Activated CD8-positive, alpha-beta T cell treated with anti-CD3 and anti-CD28 coated beads for 36 hours (primary cell): ENCODE measurements at regions of chr11 and their contacts with region 1.

Region 1: DNA sequence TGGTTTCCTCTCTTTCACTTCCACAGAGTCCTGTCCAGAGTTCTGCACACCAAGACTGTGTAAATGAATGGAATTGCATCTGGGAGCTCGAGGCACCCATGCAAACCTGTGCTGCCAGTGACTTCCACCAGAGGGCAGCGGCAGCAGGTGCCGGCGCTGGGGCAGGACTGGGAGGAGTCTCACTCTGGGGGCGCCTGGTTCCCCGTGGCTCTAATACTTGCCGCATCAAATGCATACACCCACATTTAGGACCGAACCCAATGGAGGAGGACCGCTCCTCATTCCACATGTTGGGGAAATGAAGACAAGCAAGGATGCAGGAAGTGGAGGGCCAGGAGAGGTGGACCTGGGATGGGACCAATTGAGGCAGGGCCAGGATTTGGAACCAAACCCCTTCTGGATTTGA is 1.1 kb upstream of the CD6 start:
- DNase-seq: peak; percentile 90
- ATAC-seq: peak; percentile 74
- H3K4me3 Mint-ChIP-seq: peak overlapping the region; percentile 83
- H3K27ac Mint-ChIP-seq: peak overlapping the region; percentile 63
- H3K4me1 Mint-ChIP-seq: peaks cover 16% of the 10 kb centered on the region
- H3K27me3 Mint-ChIP-seq: no peaks in the 10 kb centered on the region
- CTCF ChIP-seq: peak; percentile 95

Region 2: DNA sequence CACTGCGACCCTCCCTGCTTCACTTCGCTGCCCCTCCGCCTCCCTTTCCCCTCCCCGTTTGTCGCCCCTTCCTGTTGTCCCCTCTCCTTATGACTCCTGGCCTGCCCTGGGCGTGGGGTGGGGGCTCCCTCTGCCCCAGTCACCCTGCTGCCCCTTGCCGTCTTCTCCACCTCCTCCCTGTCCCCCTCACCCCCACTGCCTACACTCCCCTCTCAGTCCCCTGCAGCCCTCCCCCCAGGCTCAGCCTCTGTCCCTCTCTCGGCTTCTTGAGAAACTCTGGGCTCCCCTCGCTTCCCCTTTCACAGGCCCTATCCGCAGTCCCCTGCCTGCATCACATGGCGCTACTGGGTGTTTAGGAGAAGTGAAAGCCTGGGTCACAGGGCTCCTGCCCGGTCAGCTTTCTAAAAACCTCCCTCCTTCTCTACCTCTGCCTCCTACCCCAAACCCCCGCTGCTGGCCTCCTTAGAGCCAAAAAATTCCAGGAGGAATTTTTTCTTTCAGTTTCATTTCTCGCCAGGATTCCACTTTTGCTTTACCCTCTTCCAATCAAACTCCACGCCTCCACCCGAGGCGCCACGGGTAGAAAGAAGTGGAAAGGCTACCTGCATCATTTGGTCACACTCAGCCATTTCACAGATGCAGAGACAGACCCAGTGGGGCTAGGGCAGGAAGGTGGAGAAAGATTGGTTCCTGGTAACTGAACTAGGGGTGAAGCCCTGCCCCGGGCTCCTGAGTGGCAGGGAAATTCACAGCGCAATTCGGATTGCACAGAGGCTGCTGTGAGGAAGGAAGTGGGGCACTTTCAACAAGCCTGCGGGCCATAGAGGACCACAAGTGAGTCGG is 18.3 kb before region 1 on chr11 and contains the start of gene SLC15A3:
- CTCF ChIA-PET with region 1: interaction called, 22 read pairs
- POLR2A ChIA-PET with region 1: interaction called, 4 read pairs
- intact Hi-C with region 1: no loop called
- DNase-seq: peak; percentile 65
- ATAC-seq: peak; percentile 77
- H3K4me3 Mint-ChIP-seq: peak within 1 kb of the TSS; percentile 68
- H3K27ac Mint-ChIP-seq: peak within 1 kb of the TSS; percentile 73
- H3K4me1 Mint-ChIP-seq: peaks cover 29% of the 10 kb centered on the region
- H3K27me3 Mint-ChIP-seq: peaks cover 5% of the 10 kb centered on the region
- CTCF ChIP-seq: no peak
- total RNA-seq, gene SLC15A3: 3.9 to 4.7 TPM

Region 3: GRCh38 chr11:60957188-60957587 is 13.2 kb before region 1 on chr11:
- CTCF ChIA-PET with region 1: interaction called, 22 read pairs
- POLR2A ChIA-PET with region 1: interaction called, 4 read pairs
- intact Hi-C with region 1: no loop called
- DNase-seq: no peak
- ATAC-seq: no peak
- H3K4me3 Mint-ChIP-seq: no peak overlapping the region
- H3K27ac Mint-ChIP-seq: no peak overlapping the region
- H3K4me1 Mint-ChIP-seq: peaks cover 13% of the 10 kb centered on the region
- H3K27me3 Mint-ChIP-seq: peaks cover 1% of the 10 kb centered on the region
- CTCF ChIP-seq: no peak

Region 4: DNA sequence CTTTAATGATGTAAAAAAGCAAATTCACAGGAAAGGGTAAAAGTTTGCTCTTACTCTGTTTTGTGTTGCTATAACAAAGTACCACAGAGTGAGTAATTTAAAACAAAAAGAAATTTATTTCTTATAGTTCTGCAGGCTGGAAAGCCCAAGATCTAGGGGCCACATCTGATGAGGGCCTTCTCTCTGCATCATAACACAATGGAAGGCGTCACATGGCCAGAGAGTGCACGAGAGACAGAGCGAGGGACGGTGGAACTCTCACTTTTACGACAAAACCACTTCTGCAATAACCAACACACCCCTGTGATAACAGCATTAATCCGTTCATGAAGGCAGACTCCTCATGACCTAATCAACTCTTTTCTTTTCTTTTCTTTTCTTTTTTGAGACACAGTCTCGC is 32.2 kb after region 1 on chr11:
- CTCF ChIA-PET with region 1: no interaction called
- POLR2A ChIA-PET with region 1: no interaction called
- intact Hi-C with region 1: no loop called
- DNase-seq: no peak
- ATAC-seq: no peak
- H3K4me3 Mint-ChIP-seq: no peak overlapping the region
- H3K27ac Mint-ChIP-seq: peak overlapping the region; percentile 80
- H3K4me1 Mint-ChIP-seq: peaks cover 80% of the 10 kb centered on the region
- H3K27me3 Mint-ChIP-seq: no peaks in the 10 kb centered on the region
- CTCF ChIP-seq: no peak